Mammary epithelial cell (primary cell): ENCODE measurements at regions of chr4 and their contacts with region 1.

Region 1: GRCh38 chr4:169115897-169116254 is 105.8 kb upstream of the CBR4 start:
- DNase-seq: peak; percentile 100
- H3K4me3 ChIP-seq: no peak overlapping the region
- H3K27ac ChIP-seq: peak overlapping the region; percentile 97
- H3K4me1 ChIP-seq: peaks cover 34% of the 10 kb centered on the region
- H3K27me3 ChIP-seq: no peaks in the 10 kb centered on the region
- CTCF ChIP-seq: peak; percentile 42 to 61

Region 2: DNA sequence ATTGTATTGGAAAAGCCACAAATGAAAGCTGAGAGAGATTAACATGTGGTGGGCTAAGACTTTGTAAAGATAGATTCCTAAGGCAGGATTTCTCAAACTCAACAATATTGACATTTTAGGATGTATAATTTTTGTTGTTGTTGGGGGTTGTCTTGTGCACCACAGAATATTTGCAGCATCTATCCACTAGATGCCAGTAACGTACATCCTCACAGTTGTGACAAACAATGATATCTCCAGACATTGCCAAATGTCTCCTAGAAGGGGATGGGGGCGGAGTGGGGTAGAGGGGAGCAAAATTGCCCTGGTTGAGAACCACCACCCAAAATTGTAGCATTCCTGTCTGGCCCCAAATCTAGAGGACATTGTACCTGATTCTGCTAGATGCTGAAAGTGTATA is 91.1 kb before region 1 on chr4:
- CTCF ChIA-PET with region 1: no interaction called
- dilution Hi-C with region 1: no loop called
- in situ Hi-C with region 1: no loop called
- intact Hi-C with region 1: loop called (anchors 1 kb)
- DNase-seq: peak; percentile 34
- H3K4me3 ChIP-seq: no peak overlapping the region
- H3K27ac ChIP-seq: no peak overlapping the region
- H3K4me1 ChIP-seq: no peaks in the 10 kb centered on the region
- H3K27me3 ChIP-seq: no peaks in the 10 kb centered on the region
- CTCF ChIP-seq: peak; percentile 69 to 77

Region 3: GRCh38 chr4:169143335-169143734 is 27.5 kb after region 1 on chr4:
- CTCF ChIA-PET with region 1: interaction called, 11 read pairs
- dilution Hi-C with region 1: no loop called
- in situ Hi-C with region 1: no loop called
- intact Hi-C with region 1: no loop called
- DNase-seq: no peak
- H3K4me3 ChIP-seq: no peak overlapping the region
- H3K27ac ChIP-seq: no peak overlapping the region
- H3K4me1 ChIP-seq: peaks cover 7% of the 10 kb centered on the region
- H3K27me3 ChIP-seq: no peaks in the 10 kb centered on the region
- CTCF ChIP-seq: no peak

Region 4: DNA sequence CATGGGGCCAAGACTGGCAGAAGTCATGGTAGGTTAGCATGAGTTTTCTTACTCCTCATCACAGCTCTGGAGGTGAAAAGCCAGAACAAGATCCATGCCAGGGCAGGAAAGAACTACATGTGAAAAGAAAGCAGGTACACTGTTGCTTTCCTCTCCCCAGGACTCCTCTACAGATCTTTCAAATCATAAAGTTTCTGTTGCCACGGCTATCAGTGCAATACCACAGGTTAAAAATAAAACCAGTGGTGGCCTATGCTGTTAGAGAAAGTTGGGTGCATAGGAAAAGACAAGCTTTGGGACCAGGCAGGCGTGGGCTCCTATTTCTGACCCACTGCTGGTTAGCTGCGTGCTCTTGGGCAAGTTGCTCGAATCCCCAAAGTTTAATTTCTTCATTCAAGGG is 73.5 kb after region 1 on chr4:
- CTCF ChIA-PET with region 1: no interaction called
- dilution Hi-C with region 1: no loop called
- in situ Hi-C with region 1: no loop called
- intact Hi-C with region 1: no loop called
- DNase-seq: no peak
- H3K4me3 ChIP-seq: no peak overlapping the region
- H3K27ac ChIP-seq: no peak overlapping the region
- H3K4me1 ChIP-seq: peaks cover 16% of the 10 kb centered on the region
- H3K27me3 ChIP-seq: no peaks in the 10 kb centered on the region
- CTCF ChIP-seq: no peak

Region 5: GRCh38 chr4:169254546-169254983 is 138.7 kb after region 1 on chr4:
- CTCF ChIA-PET with region 1: no interaction called
- dilution Hi-C with region 1: no loop called
- in situ Hi-C with region 1: no loop called
- intact Hi-C with region 1: loop called (anchors 5 kb)
- DNase-seq: peak; percentile 45
- H3K4me3 ChIP-seq: no peak overlapping the region
- H3K27ac ChIP-seq: peak overlapping the region; percentile 36
- H3K4me1 ChIP-seq: peaks cover 60% of the 10 kb centered on the region
- H3K27me3 ChIP-seq: no peaks in the 10 kb centered on the region
- CTCF ChIP-seq: no peak

Region 6: DNA sequence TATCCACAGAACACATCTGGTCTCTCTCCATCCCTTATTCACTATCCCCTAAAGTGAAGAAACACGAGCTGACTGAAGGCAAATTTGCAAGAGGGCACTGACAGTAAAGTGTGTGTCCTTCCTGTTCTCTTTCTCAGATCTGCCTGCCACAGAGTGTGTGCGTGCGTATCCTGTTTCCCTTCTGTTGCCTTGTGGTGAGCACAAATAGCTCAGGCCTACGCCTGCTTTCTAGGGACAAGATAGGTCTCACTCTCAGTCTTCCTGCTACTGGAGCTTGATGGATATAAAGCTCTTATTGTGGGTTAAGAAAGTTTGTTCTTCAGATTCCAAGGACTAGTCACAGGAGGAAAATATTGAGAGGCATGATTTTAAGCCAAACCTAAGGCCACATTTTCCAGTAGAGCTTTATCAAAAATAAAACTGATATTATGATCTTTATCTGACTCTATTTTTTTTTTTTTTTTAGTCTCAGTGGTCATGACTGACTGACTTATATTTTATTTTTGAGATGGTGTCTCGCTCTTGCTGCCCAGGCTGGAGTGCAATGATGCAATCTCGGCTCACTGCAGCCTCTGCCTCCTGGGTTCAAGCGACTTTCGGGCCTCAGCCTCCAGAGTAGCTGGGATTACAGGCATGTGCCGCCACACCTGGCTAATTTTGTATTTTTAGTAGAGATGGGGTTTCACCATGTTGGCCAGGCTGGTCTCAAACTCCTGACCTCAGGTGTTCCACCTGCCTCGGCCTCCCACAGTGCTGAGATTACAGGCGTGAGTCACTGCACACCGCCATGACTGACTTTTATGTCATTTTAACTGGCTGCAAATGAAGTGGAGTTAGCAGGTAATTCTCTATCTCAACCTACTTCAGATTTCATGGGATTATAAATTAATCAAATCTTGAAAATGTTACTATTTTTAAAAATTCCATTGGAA is 295.2 kb after region 1 on chr4:
- CTCF ChIA-PET with region 1: no interaction called
- dilution Hi-C with region 1: no loop called
- in situ Hi-C with region 1: no loop called
- intact Hi-C with region 1: loop called (anchors 10 kb)
- DNase-seq: peak; percentile 74
- H3K4me3 ChIP-seq: no peak overlapping the region
- H3K27ac ChIP-seq: no peak overlapping the region
- H3K4me1 ChIP-seq: peaks cover 17% of the 10 kb centered on the region
- H3K27me3 ChIP-seq: no peaks in the 10 kb centered on the region
- CTCF ChIP-seq: no peak

Region 7: DNA sequence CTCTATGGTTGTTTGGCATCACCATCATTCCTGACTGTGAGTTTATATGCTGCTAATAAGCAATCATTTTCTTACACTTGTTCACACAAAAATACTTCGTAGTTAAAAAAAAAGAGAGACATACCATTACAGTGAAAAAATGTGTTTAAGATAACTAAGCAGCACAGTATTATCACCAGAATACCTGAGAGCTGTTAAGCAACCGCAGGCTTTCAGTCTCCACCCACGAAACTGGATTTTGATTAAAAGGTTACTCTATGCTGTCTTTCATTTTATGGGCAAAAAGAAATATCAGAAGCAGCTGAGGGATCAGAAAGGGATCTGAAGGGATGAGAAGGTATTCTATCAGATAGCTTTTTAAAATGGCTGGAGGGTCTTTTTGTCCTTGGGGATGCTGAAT is 348.2 kb after region 1 on chr4:
- CTCF ChIA-PET with region 1: no interaction called
- dilution Hi-C with region 1: no loop called
- in situ Hi-C with region 1: no loop called
- intact Hi-C with region 1: no loop called
- DNase-seq: no peak
- H3K4me3 ChIP-seq: no peak overlapping the region
- H3K27ac ChIP-seq: no peak overlapping the region
- H3K4me1 ChIP-seq: no peaks in the 10 kb centered on the region
- H3K27me3 ChIP-seq: no peaks in the 10 kb centered on the region
- CTCF ChIP-seq: no peak

Region 8: GRCh38 chr4:169573889-169574288 is 458.0 kb after region 1 on chr4:
- CTCF ChIA-PET with region 1: no interaction called
- dilution Hi-C with region 1: no loop called
- in situ Hi-C with region 1: no loop called
- intact Hi-C with region 1: no loop called
- DNase-seq: no peak
- H3K4me3 ChIP-seq: no peak overlapping the region
- H3K27ac ChIP-seq: no peak overlapping the region
- H3K4me1 ChIP-seq: peaks cover 6% of the 10 kb centered on the region
- H3K27me3 ChIP-seq: no peaks in the 10 kb centered on the region
- CTCF ChIP-seq: no peak